Ascending aorta (tissue), 2 donors: ENCODE measurements at regions of chr19 and their contacts with region 1.

Region 1: DNA sequence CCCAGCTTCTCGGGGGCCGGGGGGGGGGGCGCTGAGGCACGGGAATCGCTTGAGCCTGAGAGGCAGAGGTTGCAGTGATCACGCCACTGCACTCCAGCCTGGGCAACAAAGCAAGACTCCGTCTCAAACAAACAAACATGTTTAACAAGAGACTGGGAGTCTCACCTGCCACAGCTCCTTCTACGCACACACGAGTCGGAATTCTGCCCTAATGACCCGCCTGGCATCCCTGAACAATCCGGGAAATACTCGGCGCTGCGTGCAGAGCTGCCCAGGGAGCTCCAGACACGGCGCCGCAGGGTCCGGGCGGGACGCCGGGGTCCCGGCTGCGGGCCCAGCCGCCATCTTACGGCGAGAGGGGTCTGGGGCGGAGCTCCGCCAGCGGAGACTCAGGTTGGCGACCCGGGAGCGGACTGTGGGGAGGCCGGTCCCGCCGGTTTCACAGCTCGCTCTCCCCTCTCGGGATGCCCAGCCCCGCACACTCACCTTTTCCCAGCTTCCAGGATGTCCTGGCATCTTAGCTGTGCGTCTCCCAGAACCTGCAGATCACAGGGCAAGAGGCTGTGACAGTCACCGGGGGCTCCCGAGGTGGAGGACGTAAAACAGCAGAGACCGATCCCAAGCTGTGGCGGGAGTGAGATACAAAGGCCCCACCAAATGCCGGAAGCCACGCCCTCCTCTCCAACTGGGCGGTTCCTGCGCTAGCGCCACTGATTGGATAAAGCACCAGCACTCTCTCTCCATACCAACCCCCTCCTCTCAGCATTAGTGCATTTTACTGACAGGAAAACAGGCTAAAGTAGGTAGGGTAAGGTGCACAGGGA is 23.6 kb upstream of the ZNF724 start:
- DNase-seq: peak; percentile 88 to 97
- H3K4me3 ChIP-seq: peak overlapping the region; percentile 94 to 99
- H3K27ac ChIP-seq: peak overlapping the region; percentile 91
- H3K4me1 ChIP-seq: peaks cover 3 to 6% of the 10 kb centered on the region in 2 donors
- H3K27me3 ChIP-seq: no peaks in the 10 kb centered on the region
- CTCF ChIP-seq: no peak

Region 2: DNA sequence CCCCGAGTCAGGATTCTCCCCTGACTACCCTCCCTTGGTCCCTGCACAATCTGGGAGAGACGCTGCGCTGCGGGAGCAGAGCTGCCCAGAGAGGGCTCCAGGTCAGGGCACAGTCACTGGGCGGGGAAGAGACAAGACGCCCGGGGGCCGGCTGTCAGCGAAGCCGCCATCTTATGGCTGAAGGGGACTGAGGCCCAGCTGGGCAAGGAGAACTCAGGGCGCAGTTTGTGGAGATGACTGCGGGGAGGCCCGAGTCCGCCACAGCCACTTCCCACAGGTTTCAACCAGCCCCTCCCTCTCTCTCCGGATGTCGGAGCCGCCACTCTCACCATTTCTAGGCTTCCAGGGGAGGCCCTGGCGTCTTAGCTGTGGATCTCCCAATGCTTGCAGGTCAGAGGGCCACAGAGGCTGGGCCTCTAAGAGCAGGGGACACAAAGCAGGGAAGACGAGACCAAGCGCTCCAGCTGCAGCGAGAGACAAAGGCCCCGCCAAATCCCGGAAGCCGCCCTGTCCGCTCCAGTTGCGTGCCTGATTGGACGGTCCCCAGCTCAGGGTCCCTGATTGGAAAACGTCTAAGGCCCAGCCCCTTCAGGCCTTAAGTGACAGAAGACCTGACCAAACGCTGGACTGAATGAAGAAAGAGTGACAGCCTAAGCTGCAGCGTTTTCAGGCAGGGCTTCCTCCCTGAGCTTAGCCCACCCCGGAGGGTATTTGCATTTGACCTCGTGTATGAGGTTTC is 23.7 kb before region 1 on chr19 and contains the start of gene ZNF724:
- intact Hi-C with region 1: loop called (anchors 1 kb)
- DNase-seq: peak; percentile 69 to 94
- H3K4me3 ChIP-seq: peak within 1 kb of the TSS; percentile 67 to 88
- H3K27ac ChIP-seq: peak within 1 kb of the TSS in 1 of 2 donors; percentile 57
- H3K4me1 ChIP-seq: peaks cover 6 to 7% of the 10 kb centered on the region in 2 donors
- H3K27me3 ChIP-seq: no peaks in the 10 kb centered on the region
- CTCF ChIP-seq: no peak
- total RNA-seq, gene ZNF724: not detected